ENCODE measurements at regions of chr10 and their contacts with region 1.

Region 1: GRCh38 chr10:115092555-115093285 is 445 bp upstream of the ATRNL1 start:
- DNase-seq: no peak

Region 2: DNA sequence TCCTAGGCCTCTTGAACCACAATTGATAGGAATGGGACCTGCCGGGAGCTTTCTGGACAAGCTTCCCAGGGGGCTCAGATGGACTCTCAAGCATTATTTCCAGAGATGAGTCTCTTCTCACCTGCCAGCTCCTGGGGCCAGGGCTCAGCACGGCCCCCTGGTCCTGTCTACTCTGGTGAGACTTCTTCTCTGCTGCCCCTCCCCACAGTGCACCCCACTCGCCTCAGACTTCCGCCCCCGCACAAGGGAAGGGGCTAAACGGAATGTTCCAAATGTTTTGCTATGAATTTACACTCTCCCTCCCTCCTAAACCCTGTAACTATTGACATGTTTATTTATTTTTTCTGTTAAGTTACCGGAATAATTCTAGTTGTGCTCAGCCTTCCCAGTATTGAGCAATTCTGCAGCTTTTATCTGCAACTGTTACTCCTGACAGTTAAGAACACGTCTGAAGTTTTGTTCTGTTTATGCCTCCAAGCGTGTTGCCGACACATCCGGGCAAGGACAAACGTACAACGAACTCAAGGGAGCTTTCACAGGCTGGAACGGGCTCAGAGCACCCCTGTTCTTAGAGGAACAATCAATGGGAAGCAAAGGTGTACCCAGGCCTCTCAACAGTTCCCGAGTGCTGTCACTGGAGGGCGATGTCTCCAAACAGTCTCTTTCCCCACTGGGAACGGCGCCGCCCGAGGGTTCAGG is 216.0 kb before region 1 on chr10:
- intact Hi-C with region 1: loop called (anchors 10 kb)
- DNase-seq: no peak

Region 3: DNA sequence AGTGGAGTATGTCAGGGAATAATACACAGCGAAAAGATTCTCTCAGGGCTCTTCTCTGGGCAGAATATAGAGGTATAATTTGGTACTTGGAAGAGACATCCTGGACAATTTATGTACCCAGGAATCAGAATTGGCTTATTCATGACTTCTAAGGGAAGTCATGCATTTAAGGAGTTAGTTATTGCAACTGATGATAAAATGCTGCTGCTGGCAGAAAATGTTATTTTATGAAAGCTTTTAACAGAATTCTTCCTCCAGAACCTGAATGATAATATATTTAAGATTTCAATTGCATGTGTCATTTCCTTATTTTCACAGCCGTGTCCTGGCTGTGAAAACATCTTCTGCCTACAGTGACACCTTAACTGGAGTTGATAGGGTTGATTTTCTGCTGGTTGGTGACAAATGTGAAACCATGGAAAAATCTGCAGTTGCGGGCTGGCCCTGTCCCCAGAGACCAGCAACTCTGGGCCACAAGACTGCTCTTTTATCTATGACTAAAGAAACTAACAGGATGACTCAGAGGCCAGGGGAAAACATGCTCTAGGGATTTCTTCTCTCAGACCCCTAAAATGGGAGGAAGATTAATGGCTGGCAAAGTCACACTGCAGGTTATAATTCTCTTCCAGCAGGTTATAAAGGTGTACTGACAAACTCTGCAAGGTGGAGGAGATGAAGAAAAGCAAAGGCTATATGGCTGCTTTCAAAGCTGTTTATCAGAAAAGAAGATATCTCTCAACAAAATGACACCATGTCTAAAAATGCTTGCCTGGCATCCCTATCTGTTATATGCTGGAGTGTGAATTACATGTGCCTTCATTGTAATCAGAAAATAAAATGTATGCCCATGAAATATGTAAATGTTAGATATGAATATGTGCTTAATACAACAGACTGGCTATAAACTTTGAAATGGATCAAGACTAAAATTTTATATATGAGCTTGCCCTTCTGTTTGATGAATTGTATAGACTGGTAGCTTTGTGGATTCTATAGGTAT is 166.8 kb before region 1 on chr10:
- intact Hi-C with region 1: no loop called
- DNase-seq: no peak

Region 4: DNA sequence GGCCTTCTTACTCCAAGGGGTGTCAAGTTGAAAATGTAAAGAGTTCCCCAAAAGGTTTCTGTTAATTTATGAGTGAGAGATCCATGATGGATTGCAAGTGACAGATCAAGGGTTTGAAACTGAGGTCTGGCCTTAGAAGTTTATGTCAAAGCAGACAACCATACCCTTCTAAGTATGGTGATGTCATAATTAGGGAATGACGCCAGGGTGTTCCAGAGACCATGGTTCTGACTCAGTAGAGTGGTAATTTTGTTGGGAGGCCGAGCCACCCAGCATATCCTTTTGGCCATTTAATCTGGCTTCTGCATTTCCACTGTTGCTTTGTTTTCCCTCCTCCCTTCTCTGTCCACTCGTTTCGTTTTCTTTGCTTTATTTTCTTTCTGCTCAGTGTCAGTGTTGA is 152.0 kb before region 1 on chr10:
- intact Hi-C with region 1: loop called (anchors 5 kb)
- DNase-seq: no peak

Region 5: DNA sequence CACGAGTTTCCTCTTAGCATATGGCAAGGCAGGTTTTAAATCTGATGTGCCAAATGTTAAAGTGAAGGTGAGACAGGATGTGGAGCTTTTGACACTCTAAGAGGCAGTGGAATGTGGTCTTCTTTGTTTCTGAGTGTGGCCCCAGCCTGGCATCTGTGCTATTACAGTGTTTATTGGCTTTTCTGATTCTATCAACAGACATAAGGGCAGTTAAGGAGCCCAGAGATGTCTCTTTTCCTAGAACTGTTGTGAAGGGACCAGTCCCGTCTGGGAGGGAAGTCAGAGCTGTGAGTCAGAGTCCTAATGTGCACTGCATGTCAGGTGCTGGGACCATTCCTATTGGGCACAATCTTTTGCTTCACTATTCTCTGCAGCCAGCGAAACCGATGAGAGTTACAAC is 122.2 kb before region 1 on chr10:
- intact Hi-C with region 1: loop called (anchors 10 kb)
- DNase-seq: no peak

Measured in cardiac septum (tissue), 1 donor.